AG04450 (cell line): ENCODE measurements at regions of chr11 and their contacts with region 1.

Region 1: DNA sequence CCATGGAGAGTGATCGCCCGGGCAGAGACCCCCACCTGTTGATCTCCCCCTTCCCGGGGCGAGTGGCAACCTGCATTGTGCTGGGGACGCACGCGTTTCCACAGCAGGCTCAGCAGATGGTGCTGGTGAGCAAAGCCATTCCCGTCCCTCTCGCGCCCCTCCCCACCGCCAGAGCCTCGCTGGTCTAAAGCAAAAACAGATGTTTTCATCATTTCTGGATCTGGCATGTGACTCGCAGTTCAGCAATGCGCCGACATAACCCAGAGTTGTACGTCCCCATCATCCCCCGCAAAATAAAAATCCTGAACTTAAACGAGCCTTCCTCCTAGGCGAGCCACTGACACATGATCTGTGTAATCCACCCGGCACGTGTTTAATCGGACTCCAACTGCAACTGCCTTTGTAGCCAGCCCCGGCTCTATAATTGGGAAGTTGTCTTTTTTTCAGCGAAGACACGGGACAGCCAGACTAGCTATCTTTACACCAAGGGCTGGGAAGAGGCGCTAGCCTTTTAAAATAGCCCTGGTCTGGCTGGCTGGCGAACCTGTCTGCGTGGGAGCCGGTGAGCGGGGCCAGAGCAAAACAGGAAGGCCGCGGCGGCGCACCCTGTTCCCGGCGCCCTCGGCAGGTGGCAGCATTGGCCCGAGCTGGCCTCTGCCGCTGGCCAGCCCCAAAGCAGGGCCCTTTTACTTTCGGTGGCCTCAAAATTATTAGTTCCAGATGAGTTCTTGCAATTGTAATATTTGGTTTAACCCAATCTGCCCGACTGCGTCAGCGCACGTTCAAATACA is 203.0 kb upstream of the SORL1-AS1 start:
- DNase-seq: peak; percentile 97
- H3K4me3 ChIP-seq: peak overlapping the region; percentile 57
- H3K27ac ChIP-seq: peak overlapping the region; percentile 100
- H3K27me3 ChIP-seq: no peaks in the 10 kb centered on the region
- CTCF ChIP-seq: peak; percentile 94

Region 2: GRCh38 chr11:121334973-121335710 is 320.6 kb before region 1 on chr11:
- CTCF ChIA-PET with region 1: no interaction called
- POLR2A ChIA-PET with region 1: no interaction called
- DNase-seq: no peak
- H3K4me3 ChIP-seq: no peak overlapping the region
- H3K27ac ChIP-seq: no peak overlapping the region
- H3K27me3 ChIP-seq: peaks cover 24% of the 10 kb centered on the region
- CTCF ChIP-seq: peak; percentile 16; the same call in 1 of the 2 replicates

Region 3: GRCh38 chr11:121452609-121453150 is 203.1 kb before region 1 on chr11 and contains the start of gene SORL1-AS1:
- CTCF ChIA-PET with region 1: no interaction called
- POLR2A ChIA-PET with region 1: no interaction called
- DNase-seq: no peak
- H3K4me3 ChIP-seq: peak within 1 kb of the TSS; percentile 74
- H3K27ac ChIP-seq: no peak within 1 kb of the TSS
- H3K27me3 ChIP-seq: peaks cover 11% of the 10 kb centered on the region
- CTCF ChIP-seq: no peak

Region 4: DNA sequence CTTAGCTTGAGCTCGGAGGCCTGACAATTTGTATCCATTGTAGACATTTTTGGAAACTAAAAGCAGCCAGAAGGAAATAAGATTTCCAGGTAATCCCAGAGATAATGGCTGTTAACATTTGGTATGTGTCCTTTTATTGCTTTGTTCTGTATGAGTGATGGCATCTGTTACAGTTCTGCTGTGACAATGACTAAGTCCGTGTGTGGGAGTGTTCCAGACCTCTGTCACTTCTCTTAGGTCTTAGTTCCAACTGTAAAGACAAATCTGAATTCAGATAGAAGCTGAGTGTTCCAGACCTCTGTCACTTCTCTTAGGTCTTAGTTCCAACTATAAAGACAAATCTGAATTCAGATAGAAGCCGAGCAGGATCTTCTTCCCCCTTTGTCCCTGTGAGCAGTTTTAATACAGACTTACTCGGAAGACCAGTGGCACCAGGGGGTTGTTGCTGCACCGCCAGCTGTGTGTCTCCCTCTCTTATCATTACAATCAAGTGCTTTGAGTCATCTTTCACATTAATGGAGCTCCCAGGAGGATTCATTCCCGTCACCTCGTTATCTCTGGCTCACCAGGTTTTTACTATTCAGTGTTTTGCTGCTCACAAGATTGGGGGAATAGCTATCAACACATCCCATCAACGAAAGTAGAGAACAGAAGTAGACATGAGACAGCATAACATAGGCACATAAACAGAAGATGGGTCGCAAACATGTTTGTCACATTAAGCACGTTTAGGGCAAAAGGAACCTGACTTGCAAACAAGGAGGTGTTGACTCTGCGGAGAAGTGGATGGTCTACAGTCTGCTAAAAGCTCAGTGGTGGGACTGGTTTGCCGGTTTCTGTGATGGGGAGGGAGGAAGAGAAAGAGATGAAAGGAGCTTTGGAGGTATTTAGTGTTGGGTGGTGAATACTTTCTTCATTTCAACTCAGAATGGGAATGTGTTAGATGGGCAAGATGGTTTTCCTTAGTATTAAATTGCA is 11.9 kb before region 1 on chr11:
- CTCF ChIA-PET with region 1: interaction called, 21 read pairs
- POLR2A ChIA-PET with region 1: interaction called, 3 read pairs
- DNase-seq: no peak
- H3K4me3 ChIP-seq: no peak overlapping the region
- H3K27ac ChIP-seq: no peak overlapping the region
- H3K27me3 ChIP-seq: no peaks in the 10 kb centered on the region
- CTCF ChIP-seq: no peak

Region 5: GRCh38 chr11:122069707-122070360 is 414.1 kb after region 1 on chr11:
- CTCF ChIA-PET with region 1: interaction called, 10 read pairs
- POLR2A ChIA-PET with region 1: no interaction called
- DNase-seq: peak; percentile 72
- H3K4me3 ChIP-seq: no peak overlapping the region; the same call in 1 of the 2 replicates
- H3K27ac ChIP-seq: no peak overlapping the region
- H3K27me3 ChIP-seq: no peaks in the 10 kb centered on the region
- CTCF ChIP-seq: no peak

Region 6: DNA sequence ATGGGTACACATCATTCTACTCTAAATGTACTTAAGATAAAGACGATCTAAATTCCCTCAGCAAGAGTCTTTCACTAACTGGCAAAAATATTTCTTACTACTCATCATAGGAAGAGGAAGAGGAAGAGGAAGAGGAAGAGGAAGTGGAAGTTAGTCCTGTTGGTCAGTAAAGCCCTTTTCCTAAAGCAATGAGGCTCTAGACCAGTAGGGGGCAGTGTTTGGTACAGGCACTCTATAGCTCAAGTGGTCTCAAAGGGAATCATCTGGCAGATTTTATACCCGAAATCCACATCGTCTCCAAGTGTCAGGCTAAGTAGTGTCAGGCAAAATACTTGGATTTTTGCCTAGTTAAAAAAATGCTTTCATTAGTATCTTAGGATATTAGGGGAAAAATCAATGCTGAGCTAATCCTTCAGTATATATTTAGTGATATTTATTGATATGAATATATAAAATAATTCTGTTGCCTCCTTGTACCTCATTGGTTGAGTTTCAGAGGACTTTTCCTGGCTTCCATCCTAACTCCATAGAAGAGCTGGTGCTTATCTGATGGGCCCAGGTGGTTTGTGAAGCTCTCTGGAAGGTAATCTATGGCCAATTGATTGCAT is 452.6 kb after region 1 on chr11:
- CTCF ChIA-PET with region 1: interaction called, 34 read pairs
- POLR2A ChIA-PET with region 1: no interaction called
- DNase-seq: no peak
- H3K4me3 ChIP-seq: no peak overlapping the region
- H3K27ac ChIP-seq: no peak overlapping the region
- H3K27me3 ChIP-seq: no peaks in the 10 kb centered on the region
- CTCF ChIP-seq: peak; percentile 64

Region 7: GRCh38 chr11:122197055-122197987 is 541.6 kb after region 1 on chr11:
- CTCF ChIA-PET with region 1: interaction called, 12 read pairs
- POLR2A ChIA-PET with region 1: interaction called, 8 read pairs
- DNase-seq: peak; percentile 94
- H3K4me3 ChIP-seq: no peak overlapping the region
- H3K27ac ChIP-seq: peak overlapping the region; percentile 63
- H3K27me3 ChIP-seq: no peaks in the 10 kb centered on the region
- CTCF ChIP-seq: no peak

Region 8: GRCh38 chr11:122505304-122506006 is 849.7 kb after region 1 on chr11:
- CTCF ChIA-PET with region 1: interaction called, 44 read pairs
- POLR2A ChIA-PET with region 1: interaction called, 5 read pairs
- DNase-seq: peak; percentile 81
- H3K4me3 ChIP-seq: no peak overlapping the region
- H3K27ac ChIP-seq: no peak overlapping the region
- H3K27me3 ChIP-seq: no peaks in the 10 kb centered on the region
- CTCF ChIP-seq: peak; percentile 90